WTC11 (cell line): ENCODE measurements at regions of chr7 and their contacts with region 1.

Region 1: DNA sequence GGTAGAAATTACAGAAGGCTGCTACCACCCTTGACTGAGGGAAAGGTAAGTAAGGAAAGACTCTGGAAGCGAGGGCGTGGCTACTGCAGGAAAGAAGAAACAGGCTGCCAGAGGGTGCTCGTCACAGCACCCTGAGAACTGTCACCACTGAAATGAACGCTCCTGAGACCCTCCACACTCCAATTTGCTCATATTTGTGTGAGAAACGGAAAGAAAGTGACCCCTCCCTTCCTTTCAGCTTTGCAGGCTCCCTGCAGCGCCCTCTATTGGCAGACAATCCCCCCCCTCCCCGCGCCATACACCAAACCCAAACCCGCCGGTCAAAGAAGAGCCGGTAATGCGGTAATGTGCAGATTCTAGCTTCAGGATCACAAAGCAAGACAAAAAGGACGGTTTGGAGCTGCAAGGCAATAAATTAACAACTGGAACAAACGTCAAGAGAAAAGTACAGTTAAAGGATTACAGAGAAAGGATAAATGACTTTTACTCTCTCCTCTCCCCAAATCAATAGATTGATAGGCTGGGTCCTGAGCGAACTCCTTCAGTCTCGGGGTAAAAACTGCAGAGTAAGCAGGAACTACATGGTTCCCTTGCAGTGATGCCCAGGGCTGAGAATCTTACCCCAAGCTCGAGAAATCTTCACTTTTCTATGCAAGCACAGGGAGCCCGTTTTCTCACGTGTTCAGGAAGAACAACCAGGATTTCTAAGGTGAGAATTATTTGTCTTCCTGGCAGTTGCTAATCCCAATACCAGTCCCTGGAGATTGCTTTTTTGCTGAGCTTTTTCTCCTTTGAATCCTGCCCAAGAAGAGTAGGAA is 47.6 kb downstream of the STEAP1B start:
- DNase-seq: peak; percentile 86
- ATAC-seq: peak; percentile 93
- H3K4me3 Mint-ChIP-seq: peak overlapping the region; percentile 59
- H3K27ac Mint-ChIP-seq: no peak overlapping the region
- H3K4me1 Mint-ChIP-seq: peaks cover 19% of the 10 kb centered on the region
- H3K27me3 Mint-ChIP-seq: no peaks in the 10 kb centered on the region
- CTCF ChIP-seq: peak; percentile 79

Region 2: GRCh38 chr7:22356701-22357353 is 95.5 kb before region 1 on chr7 and contains the start of gene RAPGEF5:
- CTCF ChIA-PET with region 1: interaction called, 14 read pairs
- POLR2A ChIA-PET with region 1: no interaction called
- DNase-seq: peak; percentile 46
- ATAC-seq: peak; percentile 76
- H3K4me3 Mint-ChIP-seq: peak within 1 kb of the TSS; percentile 85
- H3K27ac Mint-ChIP-seq: no peak within 1 kb of the TSS
- H3K4me1 Mint-ChIP-seq: peaks cover 15% of the 10 kb centered on the region
- H3K27me3 Mint-ChIP-seq: peaks cover 29% of the 10 kb centered on the region
- CTCF ChIP-seq: no peak
- total RNA-seq, gene RAPGEF5: 9.9 to 12.3 TPM (median 10.3 TPM) in 3 replicates

Region 3: DNA sequence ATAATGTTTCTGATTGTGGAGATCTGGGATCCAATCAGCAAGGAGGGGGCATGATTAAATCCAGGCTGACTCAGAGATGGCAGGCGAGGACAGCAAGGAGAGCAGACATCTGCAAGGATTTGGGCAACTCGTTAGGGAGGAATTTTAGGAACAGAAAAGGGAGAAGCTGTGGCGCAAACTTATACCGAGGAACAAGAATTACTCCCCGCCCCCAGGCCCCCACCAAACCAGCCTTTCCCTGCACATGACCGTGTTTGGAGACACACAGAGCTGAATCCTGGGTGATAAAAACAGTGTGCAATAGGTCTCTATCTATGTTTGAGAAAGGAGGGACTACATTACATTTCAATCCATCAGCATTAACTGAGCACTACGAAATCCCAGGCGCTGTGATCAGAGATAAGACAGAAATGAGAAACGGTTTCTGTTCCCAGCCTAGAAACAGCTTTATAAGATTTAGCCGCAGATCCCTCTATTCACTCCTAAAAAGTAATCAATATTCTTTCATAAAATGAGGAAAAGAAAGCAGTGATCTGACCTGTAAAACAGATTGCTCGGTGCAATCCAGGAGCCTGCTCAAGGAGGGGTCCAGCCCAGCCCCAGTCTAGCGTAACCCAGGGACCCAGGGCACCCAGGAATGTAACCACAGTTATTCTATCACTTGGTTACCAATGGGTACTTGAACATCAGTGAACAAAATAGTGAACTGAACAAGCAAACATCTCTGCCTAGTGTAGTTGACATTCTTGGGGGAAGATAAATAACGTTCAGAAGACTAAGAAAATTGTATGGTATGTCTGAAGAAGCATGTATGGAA is 58.2 kb before region 1 on chr7:
- CTCF ChIA-PET with region 1: no interaction called
- POLR2A ChIA-PET with region 1: no interaction called
- DNase-seq: no peak
- ATAC-seq: no peak
- H3K4me3 Mint-ChIP-seq: no peak overlapping the region
- H3K27ac Mint-ChIP-seq: no peak overlapping the region
- H3K4me1 Mint-ChIP-seq: peaks cover 31% of the 10 kb centered on the region
- H3K27me3 Mint-ChIP-seq: no peaks in the 10 kb centered on the region
- CTCF ChIP-seq: no peak

Region 4: GRCh38 chr7:22697876-22698606 is 245.7 kb after region 1 on chr7:
- CTCF ChIA-PET with region 1: no interaction called
- POLR2A ChIA-PET with region 1: no interaction called
- DNase-seq: no peak
- ATAC-seq: no peak
- H3K4me3 Mint-ChIP-seq: no peak overlapping the region
- H3K27ac Mint-ChIP-seq: no peak overlapping the region
- H3K4me1 Mint-ChIP-seq: peaks cover 20% of the 10 kb centered on the region
- H3K27me3 Mint-ChIP-seq: no peaks in the 10 kb centered on the region
- CTCF ChIP-seq: no peak